ENCODE measurements at regions of chr7 and their contacts with region 1.

Region 1: DNA sequence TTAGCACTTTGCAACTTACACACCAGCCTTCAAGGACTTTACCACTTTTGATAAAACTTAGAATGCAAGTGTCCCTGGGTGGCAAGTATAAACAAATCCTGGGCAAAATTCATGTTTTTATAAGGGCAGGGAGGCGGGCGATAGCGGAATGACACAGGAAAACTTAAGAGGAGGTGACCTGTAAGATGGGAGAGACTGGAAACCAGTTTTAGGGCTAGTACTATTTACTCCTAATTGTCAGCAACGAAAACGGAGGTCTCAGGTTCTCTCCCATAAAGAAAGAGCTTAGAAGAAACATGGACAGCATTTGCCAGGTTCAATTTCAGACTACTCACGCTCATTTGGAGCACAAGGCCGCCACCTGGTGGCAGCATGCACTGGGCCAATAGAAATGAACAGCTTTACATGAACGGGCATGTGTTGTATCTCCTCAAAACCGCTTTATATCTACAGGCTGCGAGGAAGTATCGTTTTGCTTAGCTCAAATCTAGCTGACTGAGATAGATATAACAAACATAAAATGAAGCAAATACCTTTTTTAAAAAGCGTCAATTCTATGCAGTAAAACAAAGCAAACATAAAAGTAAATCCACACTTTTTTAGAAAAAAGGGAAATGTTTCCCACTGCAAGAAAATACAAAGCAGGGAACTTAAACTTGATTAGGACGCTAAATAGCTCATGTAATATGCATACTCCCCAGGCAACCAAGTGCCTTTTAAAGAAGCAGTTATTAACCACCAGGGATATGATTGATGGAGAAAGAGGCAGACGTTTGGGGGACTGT is 37.6 kb upstream of the SVOPL start:
- DNase-seq: peak; percentile 87
- ATAC-seq: peak; percentile 94
- H3K4me3 Mint-ChIP-seq: no peak overlapping the region
- H3K27ac Mint-ChIP-seq: no peak overlapping the region
- H3K4me1 Mint-ChIP-seq: peaks cover 10% of the 10 kb centered on the region
- H3K27me3 Mint-ChIP-seq: no peaks in the 10 kb centered on the region

Region 2: DNA sequence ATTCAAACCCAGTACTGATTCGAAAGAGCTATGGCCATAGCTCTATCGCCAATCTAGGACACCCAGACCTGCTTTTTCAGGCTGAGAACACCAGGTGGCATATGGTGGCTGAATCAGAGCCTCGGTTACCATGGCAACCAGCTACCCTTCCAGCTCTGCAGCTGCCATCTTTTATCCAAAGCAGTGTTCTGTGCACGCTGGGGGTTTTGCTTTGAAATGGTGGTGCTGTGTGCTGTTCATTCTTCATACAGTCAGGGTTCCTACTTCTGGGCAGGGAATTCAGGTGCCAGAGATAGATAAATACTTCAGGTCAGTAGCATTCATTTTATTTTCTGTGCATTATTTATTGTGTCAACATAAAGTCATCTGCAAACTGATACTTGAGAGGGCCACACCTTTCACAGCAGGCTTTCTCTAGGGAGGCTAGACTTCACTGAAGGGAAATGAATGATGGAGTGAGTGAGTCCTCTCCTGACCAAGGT is 577.1 kb before region 1 on chr7:
- CTCF ChIA-PET with region 1: interaction called, 37 read pairs
- DNase-seq: peak; percentile 86
- ATAC-seq: peak; percentile 97
- H3K4me3 Mint-ChIP-seq: no peak overlapping the region
- H3K27ac Mint-ChIP-seq: no peak overlapping the region
- H3K4me1 Mint-ChIP-seq: no peaks in the 10 kb centered on the region
- H3K27me3 Mint-ChIP-seq: no peaks in the 10 kb centered on the region

Region 3: DNA sequence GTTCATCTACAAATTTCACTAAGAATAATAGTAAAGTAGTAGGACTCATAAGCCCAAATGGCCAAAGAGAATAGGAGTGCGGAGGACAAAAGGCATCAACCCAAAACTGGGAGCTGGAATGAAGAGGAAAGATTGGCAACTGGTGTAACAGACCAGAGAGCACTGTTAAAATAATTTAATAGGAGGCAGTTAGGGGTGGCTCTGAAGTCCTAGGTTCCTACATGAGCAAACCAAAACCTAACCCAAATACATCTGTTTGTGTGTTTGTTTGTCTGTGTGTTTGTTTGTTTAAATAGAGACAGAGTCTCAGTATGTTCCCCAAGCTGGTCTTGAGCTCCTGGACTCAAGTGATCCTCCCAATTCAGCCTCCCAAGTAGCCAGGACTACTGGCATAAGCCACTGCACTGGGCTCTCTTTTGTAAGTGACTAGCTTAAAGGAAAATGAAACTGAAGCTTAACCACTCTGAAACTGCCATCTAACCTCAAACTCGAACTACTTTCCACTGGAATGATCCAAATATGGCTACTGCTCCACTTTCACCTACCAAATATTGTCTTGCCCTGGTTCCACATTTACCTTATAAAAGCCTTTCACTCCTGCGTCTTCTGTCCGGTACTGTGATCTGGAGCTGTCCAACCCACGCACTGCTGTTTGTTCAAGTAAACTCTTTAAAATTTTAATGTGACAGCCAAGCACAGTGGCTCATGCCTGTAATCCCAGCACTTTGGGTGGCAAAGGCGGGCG is 567.6 kb before region 1 on chr7:
- CTCF ChIA-PET with region 1: interaction called, 12 read pairs
- DNase-seq: peak; percentile 40
- ATAC-seq: peak; percentile 85
- H3K4me3 Mint-ChIP-seq: no peak overlapping the region
- H3K27ac Mint-ChIP-seq: peak overlapping the region; percentile 39
- H3K4me1 Mint-ChIP-seq: peaks cover 16% of the 10 kb centered on the region
- H3K27me3 Mint-ChIP-seq: peaks cover 49% of the 10 kb centered on the region

Region 4: DNA sequence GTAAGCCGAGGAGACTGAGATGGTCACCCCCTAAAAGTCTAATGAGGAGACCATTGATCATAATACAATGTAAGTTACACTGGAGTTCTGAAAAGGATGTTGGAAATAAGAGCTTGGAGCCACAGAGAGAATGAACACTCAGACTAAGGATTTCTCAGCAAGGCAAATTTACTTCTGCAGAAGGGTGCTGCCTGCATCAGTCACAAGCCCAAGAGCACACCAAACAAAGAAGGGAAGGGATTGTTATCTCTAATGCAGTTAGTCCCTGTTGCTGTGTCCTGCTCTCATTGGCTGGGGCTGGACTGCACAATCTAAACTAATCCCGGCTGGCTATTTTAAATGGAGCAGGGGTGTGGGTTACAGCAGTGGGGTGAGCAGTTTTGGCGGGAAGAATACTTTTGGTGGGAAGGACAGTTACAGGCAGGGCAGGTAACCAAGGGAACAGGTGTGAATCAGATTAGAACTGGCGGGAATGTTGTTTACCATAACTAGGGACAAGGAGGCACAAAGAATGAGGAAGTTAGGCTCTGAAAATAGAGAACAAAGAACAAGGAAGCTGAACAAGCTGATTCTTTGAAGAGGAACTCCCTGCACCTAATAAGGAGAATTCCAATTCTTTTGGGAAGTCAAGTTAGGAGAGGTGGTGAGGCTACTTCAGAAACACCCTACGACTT is 309.0 kb before region 1 on chr7:
- CTCF ChIA-PET with region 1: no interaction called
- DNase-seq: no peak
- ATAC-seq: no peak
- H3K4me3 Mint-ChIP-seq: no peak overlapping the region
- H3K27ac Mint-ChIP-seq: no peak overlapping the region
- H3K4me1 Mint-ChIP-seq: peaks cover 8% of the 10 kb centered on the region
- H3K27me3 Mint-ChIP-seq: no peaks in the 10 kb centered on the region

Region 5: GRCh38 chr7:138752568-138753518 is 14.1 kb after region 1 on chr7:
- CTCF ChIA-PET with region 1: interaction called, 32 read pairs
- DNase-seq: peak; percentile 97
- ATAC-seq: peak; percentile 95
- H3K4me3 Mint-ChIP-seq: peak overlapping the region; percentile 16
- H3K27ac Mint-ChIP-seq: peak overlapping the region; percentile 86
- H3K4me1 Mint-ChIP-seq: peaks cover 68% of the 10 kb centered on the region
- H3K27me3 Mint-ChIP-seq: no peaks in the 10 kb centered on the region

Region 6: GRCh38 chr7:138865843-138866242 is 127.1 kb after region 1 on chr7:
- CTCF ChIA-PET with region 1: interaction called, 13 read pairs
- DNase-seq: peak; percentile 80
- ATAC-seq: peak; percentile 96
- H3K4me3 Mint-ChIP-seq: no peak overlapping the region
- H3K27ac Mint-ChIP-seq: peak overlapping the region; percentile 67
- H3K4me1 Mint-ChIP-seq: peaks cover 18% of the 10 kb centered on the region
- H3K27me3 Mint-ChIP-seq: no peaks in the 10 kb centered on the region

Measured in activated CD8-positive, alpha-beta memory T cell treated with anti-CD3 and anti-CD28 coated beads, Interleukin-2, amount 10 ng/mL, durations not matched to agents 7 days and 5 days (primary cell).